Vagina (tissue), 2 donors: ENCODE measurements at regions of chr1 and their contacts with region 1.

Region 1: DNA sequence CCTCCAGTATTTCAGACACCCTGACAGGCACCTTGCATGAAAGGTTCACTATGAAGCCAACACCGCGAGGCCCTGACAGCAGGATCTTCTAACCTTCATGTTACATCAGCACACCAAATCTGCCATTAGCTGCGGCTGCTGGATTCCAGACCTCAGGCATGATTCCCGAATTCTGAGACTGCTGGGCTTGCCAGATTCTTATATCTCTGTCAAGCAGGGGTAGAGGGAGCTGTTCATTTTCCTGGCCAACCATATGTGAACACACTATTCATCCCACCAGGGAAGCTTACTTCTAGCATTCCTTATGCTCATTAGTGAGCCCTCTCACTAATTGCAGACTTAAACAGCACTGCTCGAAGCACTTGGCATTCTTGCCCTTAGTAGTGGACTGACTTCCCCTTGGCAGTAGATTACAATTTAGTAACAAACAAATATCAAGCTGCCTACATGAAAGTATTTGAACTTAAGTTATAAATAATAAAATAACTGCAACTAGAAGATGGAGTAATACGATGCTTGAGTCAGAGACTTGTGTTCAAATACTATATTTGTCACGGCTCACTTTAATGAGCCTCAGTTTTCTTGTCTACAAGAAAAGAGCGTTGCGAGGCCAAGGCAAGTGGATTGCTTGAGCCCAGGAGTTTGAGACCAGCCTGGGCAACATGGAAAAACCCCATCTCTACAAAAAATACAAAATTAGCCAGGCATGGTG is 43.3 kb downstream of the NID1 start:
- DNase-seq: no peak
- H3K4me3 ChIP-seq: no peak overlapping the region
- H3K27ac ChIP-seq: peak overlapping the region; percentile 92
- H3K4me1 ChIP-seq: peaks cover 51% of the 10 kb centered on the region
- H3K27me3 ChIP-seq: no peaks in the 10 kb centered on the region
- CTCF ChIP-seq: no peak
- POLR2A ChIP-seq: no peak

Region 2: GRCh38 chr1:236058141-236058934 is 36.8 kb after region 1 on chr1:
- intact Hi-C with region 1: loop called (anchors 5 kb)
- DNase-seq: no peak
- H3K4me3 ChIP-seq: peak overlapping the region; percentile 4 to 6
- H3K27ac ChIP-seq: peak overlapping the region; percentile 77
- H3K4me1 ChIP-seq: peaks cover 46% of the 10 kb centered on the region
- H3K27me3 ChIP-seq: no peaks in the 10 kb centered on the region
- CTCF ChIP-seq: no peak
- POLR2A ChIP-seq: no peak